Activated CD8-positive, alpha-beta T cell treated with anti-CD3 and anti-CD28 coated beads, Interleukin-2, amount 10 ng/mL, durations not matched to agents 7 days and 5 days (primary cell): ENCODE measurements at regions of chr4 and their contacts with region 1.

Region 1: DNA sequence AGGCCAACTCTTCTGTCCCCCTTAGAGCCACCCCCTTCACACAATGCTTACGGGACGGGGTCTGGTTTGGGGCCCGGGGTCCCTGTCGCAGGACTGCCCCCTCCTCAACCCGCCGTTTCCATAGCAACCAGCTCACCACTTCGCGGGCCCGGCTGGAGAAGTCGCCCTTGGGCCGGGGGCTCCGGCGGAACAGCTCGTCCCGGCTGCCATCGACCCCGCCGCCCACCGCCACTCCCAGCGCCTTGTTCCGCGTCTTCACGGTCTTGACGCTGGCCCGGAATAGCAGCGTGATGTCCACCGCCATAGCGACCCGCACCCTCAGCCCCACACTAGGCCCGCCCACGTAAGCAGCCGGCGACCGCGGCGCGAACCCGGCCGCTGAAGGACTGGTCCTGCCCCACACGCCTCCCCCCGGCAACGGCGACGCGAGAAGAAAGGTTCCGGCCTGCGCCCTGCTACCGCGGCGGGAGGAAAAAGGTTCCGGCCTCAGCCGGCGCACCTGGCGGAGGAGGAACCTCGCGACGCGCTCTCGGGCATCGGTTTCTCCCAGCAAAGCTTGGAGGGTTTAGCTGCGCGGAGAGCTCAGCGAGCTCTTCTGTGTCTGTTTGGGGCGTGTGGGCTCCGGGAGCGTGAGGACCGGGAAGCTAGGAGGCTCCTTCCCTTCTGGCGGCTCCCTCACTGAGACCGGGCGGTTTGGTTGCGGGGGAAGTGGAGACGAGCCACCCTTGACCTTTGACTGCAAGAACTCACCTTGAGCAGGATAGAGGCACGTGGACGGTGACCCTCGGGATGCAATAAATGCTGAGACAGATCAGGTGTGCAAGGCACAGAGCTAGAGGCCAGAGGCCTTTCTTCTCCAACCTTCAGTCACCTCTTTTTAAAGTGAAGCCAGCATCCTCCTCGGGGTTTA is at the start of gene STX18:
- DNase-seq: peak; percentile 90
- ATAC-seq: peak; percentile 98
- H3K4me3 Mint-ChIP-seq: peak within 1 kb of the TSS; percentile 87
- H3K27ac Mint-ChIP-seq: peak within 1 kb of the TSS; percentile 93
- H3K4me1 Mint-ChIP-seq: peaks cover 41% of the 10 kb centered on the region
- H3K27me3 Mint-ChIP-seq: no peaks in the 10 kb centered on the region
- total RNA-seq, gene STX18: 21.2 to 24.9 TPM

Region 2: DNA sequence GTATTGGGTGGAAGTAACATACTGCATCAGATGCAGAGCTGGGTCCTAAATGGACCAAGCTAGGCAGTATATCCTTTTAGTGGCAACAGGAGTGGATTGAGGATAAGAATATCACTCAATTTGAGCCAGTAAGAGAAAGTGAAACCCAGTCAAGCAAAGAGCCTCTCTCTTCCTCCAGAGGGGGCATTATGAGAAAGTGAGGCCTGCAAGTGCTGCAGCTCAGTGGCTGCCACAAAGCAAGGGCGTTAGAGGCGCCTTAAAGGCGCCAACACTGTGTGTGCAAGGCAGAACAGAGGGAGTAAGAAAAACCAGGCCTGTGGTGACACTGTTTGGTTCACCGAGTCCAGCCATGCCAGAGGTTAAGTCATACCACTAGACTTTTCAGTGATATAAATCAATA is 17.6 kb before region 1 on chr4:
- CTCF ChIA-PET with region 1: interaction called, 19 read pairs
- POLR2A ChIA-PET with region 1: interaction called, 13 read pairs
- DNase-seq: peak; percentile 63
- ATAC-seq: peak; percentile 95
- H3K4me3 Mint-ChIP-seq: no peak overlapping the region
- H3K27ac Mint-ChIP-seq: peak overlapping the region; percentile 64
- H3K4me1 Mint-ChIP-seq: peaks cover 23% of the 10 kb centered on the region
- H3K27me3 Mint-ChIP-seq: no peaks in the 10 kb centered on the region